CD8-positive, alpha-beta T cell (primary cell): ENCODE measurements at regions of chr5 and their contacts with region 1.

Region 1: GRCh38 chr5:1799602-1800471 is at the start of gene MRPL36:
- DNase-seq: peak; percentile 84 to 96 (median 94)
- ATAC-seq: peak; percentile 70
- H3K4me3 ChIP-seq: peak within 1 kb of the TSS; percentile 82 to 94
- H3K4me3 Mint-ChIP-seq: peak within 1 kb of the TSS; percentile 99
- H3K27ac ChIP-seq: peak within 1 kb of the TSS; percentile 70 to 80
- H3K27ac Mint-ChIP-seq: peak within 1 kb of the TSS; percentile 99
- H3K4me1 ChIP-seq: peaks cover 24% of the 10 kb centered on the region
- H3K4me1 Mint-ChIP-seq: peaks cover 68% of the 10 kb centered on the region
- H3K27me3 ChIP-seq: no peaks in the 10 kb centered on the region
- H3K27me3 Mint-ChIP-seq: no peaks in the 10 kb centered on the region
- CTCF ChIP-seq: no peak
- total RNA-seq, gene MRPL36: 11.6 to 12.7 TPM

Region 2: GRCh38 chr5:892394-893136 is 907.3 kb before region 1 on chr5 and contains the starts of genes BRD9 and TRIP13:
- CTCF ChIA-PET with region 1: no interaction called
- POLR2A ChIA-PET with region 1: no interaction called
- intact Hi-C with region 1: loop called (anchors 5 kb)
- DNase-seq: peak; percentile 68 to 92 (median 81)
- ATAC-seq: peak; percentile 94
- H3K4me3 ChIP-seq: peak within 1 kb of the TSS; percentile 85 to 90
- H3K4me3 Mint-ChIP-seq: peak within 1 kb of the TSS; percentile 85
- H3K27ac ChIP-seq: peak within 1 kb of the TSS; percentile 74 to 77
- H3K27ac Mint-ChIP-seq: peak within 1 kb of the TSS; percentile 91
- H3K4me1 ChIP-seq: peaks cover 17% of the 10 kb centered on the region
- H3K4me1 Mint-ChIP-seq: peaks cover 22% of the 10 kb centered on the region
- H3K27me3 ChIP-seq: no peaks in the 10 kb centered on the region
- H3K27me3 Mint-ChIP-seq: no peaks in the 10 kb centered on the region
- CTCF ChIP-seq: no peak
- total RNA-seq, gene BRD9: 99.8 to 108 TPM
- total RNA-seq, gene TRIP13: 0.33 to 0.76 TPM

Region 3: DNA sequence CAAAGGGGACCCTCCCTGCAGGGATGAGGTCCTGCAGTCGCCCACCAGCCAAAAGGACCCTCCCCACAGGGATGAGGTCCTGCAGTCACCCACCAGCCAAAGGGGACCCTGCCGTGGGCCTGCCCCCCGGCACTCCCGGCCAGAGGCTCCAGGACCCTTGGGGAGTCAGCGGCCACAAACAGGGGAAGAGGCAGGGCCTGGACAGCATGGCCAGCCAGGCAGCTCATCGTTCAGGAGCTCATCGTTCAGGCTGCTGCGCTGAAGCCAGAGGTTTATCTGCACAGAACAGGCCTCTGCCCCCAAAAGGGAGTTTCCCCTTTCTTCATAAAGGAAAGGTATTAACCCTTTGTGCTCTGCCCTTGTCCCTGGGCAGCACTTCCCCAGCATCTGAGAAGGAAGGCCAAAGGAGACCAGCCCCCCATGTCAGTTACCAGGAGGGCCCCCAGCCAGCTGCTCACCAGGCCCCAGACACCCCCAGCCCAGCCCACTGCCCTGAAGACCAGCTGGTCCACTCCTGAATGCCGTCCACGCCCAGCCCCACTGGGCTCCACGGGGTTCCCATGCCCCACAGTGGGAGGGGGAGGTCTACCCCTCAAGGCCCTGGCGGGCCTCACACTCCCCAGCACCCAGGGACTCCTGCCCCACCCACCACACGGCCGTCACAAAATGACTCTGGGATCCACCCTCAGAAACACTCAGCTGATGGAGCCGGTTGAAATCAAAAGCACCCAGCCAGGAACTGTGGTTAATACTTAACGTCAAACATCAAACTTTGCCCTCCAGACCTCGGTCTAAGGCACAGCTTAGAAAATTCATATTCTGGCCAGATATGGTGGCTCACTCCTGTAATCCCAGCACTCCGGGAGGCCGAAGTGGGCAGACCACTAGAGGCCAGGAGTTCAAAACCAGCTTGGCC is 694.2 kb before region 1 on chr5:
- CTCF ChIA-PET with region 1: no interaction called
- POLR2A ChIA-PET with region 1: no interaction called
- intact Hi-C with region 1: loop called in 1 of 2 experiments (anchors 10 kb)
- DNase-seq: peak in 8 of 9 experiments; percentile 26 to 89 (median 76)
- ATAC-seq: peak; percentile 73
- H3K4me3 ChIP-seq: peak overlapping the region; percentile 41 to 79
- H3K4me3 Mint-ChIP-seq: peak overlapping the region; percentile 78
- H3K27ac ChIP-seq: peak overlapping the region; percentile 31 to 82
- H3K27ac Mint-ChIP-seq: peak overlapping the region; percentile 97
- H3K4me1 ChIP-seq: peaks cover 99% of the 10 kb centered on the region
- H3K4me1 Mint-ChIP-seq: peaks cover 79% of the 10 kb centered on the region
- H3K27me3 ChIP-seq: no peaks in the 10 kb centered on the region
- H3K27me3 Mint-ChIP-seq: no peaks in the 10 kb centered on the region
- CTCF ChIP-seq: no peak

Region 4: GRCh38 chr5:1385395-1386273 is 414.2 kb before region 1 on chr5:
- CTCF ChIA-PET with region 1: no interaction called
- POLR2A ChIA-PET with region 1: no interaction called
- intact Hi-C with region 1: loop called in 1 of 2 experiments (anchors 5 kb)
- DNase-seq: peak; percentile 73 to 93 (median 88)
- ATAC-seq: peak; percentile 77
- H3K4me3 ChIP-seq: peak overlapping the region; percentile 66 to 73
- H3K4me3 Mint-ChIP-seq: peak overlapping the region; percentile 97
- H3K27ac ChIP-seq: peak overlapping the region; percentile 94 to 96
- H3K27ac Mint-ChIP-seq: peak overlapping the region; percentile 100
- H3K4me1 ChIP-seq: peaks cover 17% of the 10 kb centered on the region
- H3K4me1 Mint-ChIP-seq: peaks cover 30% of the 10 kb centered on the region
- H3K27me3 ChIP-seq: no peaks in the 10 kb centered on the region
- H3K27me3 Mint-ChIP-seq: no peaks in the 10 kb centered on the region
- CTCF ChIP-seq: no peak

Region 5: DNA sequence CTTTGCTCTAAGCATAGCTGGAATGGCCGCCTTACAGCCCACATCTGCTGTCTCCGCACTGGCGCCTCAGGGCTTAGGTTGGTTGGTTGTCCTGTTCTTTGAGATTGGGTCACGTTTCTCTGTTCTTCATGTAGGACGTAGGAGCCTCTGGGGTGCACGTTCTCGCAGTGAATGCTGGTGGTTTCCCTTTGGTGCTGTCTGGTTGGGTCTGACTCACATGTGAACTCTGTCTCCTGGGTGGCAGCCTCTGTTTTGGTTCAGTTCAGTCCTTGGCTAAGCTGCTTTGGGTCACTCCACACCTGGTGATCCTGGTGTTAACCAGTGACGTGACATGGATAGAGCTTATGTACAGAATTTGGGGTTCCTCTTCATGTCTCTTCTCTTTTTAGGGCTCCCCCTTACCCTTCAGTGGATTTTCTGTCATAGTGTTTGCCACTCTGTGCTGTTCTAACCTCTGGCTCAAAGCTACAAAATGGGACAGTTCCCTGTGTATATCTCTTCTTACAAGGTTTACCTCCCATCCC is 263.5 kb before region 1 on chr5:
- CTCF ChIA-PET with region 1: no interaction called
- POLR2A ChIA-PET with region 1: no interaction called
- intact Hi-C with region 1: loop called in 1 of 2 experiments (anchors 10 kb)
- DNase-seq: peak; percentile 47 to 94 (median 71)
- ATAC-seq: peak; percentile 96
- H3K4me3 ChIP-seq: peak overlapping the region; percentile 35
- H3K4me3 Mint-ChIP-seq: peak overlapping the region; percentile 72
- H3K27ac ChIP-seq: peak overlapping the region; percentile 64 to 93
- H3K27ac Mint-ChIP-seq: peak overlapping the region; percentile 93
- H3K4me1 ChIP-seq: peaks cover 26% of the 10 kb centered on the region
- H3K4me1 Mint-ChIP-seq: peaks cover 24% of the 10 kb centered on the region
- H3K27me3 ChIP-seq: no peaks in the 10 kb centered on the region
- H3K27me3 Mint-ChIP-seq: no peaks in the 10 kb centered on the region
- CTCF ChIP-seq: no peak

Region 6: DNA sequence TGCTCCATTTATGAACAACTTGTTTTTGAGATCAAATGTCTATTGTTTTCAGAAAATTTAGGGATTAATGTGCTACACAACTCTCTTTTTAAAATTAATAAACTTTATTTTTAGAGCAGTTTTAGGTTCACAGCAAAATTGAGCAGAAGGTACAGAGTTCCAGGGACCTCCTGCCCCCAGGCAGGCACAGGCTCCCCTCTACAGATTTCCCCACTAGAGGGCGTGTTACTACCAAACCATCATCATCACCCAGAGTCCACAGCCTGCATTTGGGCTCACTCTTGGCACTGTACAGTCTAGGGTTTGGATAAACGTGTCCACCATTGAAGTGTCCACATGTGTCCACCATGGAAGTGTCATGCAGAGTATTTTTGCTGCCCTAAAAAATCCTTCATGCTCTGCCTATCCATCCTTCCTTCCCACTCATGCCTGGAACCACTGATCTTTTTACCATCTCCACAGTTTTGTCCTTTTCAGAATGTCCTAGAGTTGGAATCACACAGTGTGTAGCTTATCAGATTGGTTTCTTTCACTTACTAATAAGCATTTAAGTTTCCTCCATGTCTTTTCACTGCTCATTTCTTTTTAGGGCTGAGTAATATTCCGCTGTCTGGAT is 61.9 kb before region 1 on chr5:
- CTCF ChIA-PET with region 1: interaction called, 8 read pairs
- POLR2A ChIA-PET with region 1: no interaction called
- intact Hi-C with region 1: loop called (anchors 2 kb)
- DNase-seq: peak in 8 of 9 experiments; percentile 30 to 67 (median 53)
- ATAC-seq: peak; percentile 65
- H3K4me3 ChIP-seq: no peak overlapping the region
- H3K4me3 Mint-ChIP-seq: no peak overlapping the region
- H3K27ac ChIP-seq: no peak overlapping the region
- H3K27ac Mint-ChIP-seq: no peak overlapping the region
- H3K4me1 ChIP-seq: no peaks in the 10 kb centered on the region
- H3K4me1 Mint-ChIP-seq: no peaks in the 10 kb centered on the region
- H3K27me3 ChIP-seq: no peaks in the 10 kb centered on the region
- H3K27me3 Mint-ChIP-seq: peaks cover 6% of the 10 kb centered on the region
- CTCF ChIP-seq: peak; percentile 74

Region 7: GRCh38 chr5:1763548-1763911 is 36.3 kb before region 1 on chr5:
- CTCF ChIA-PET with region 1: no interaction called
- POLR2A ChIA-PET with region 1: no interaction called
- intact Hi-C with region 1: loop called in 1 of 2 experiments (anchors 5 kb)
- DNase-seq: peak in 6 of 9 experiments; percentile 17 to 61 (median 48)
- ATAC-seq: no peak
- H3K4me3 ChIP-seq: no peak overlapping the region
- H3K4me3 Mint-ChIP-seq: no peak overlapping the region
- H3K27ac ChIP-seq: no peak overlapping the region
- H3K27ac Mint-ChIP-seq: no peak overlapping the region
- H3K4me1 ChIP-seq: no peaks in the 10 kb centered on the region
- H3K4me1 Mint-ChIP-seq: no peaks in the 10 kb centered on the region
- H3K27me3 ChIP-seq: no peaks in the 10 kb centered on the region
- H3K27me3 Mint-ChIP-seq: peaks cover 14% of the 10 kb centered on the region
- CTCF ChIP-seq: peak; percentile 58